Caco-2 (cell line): ENCODE measurements at regions of chr10 and their contacts with region 1.

Region 1: DNA sequence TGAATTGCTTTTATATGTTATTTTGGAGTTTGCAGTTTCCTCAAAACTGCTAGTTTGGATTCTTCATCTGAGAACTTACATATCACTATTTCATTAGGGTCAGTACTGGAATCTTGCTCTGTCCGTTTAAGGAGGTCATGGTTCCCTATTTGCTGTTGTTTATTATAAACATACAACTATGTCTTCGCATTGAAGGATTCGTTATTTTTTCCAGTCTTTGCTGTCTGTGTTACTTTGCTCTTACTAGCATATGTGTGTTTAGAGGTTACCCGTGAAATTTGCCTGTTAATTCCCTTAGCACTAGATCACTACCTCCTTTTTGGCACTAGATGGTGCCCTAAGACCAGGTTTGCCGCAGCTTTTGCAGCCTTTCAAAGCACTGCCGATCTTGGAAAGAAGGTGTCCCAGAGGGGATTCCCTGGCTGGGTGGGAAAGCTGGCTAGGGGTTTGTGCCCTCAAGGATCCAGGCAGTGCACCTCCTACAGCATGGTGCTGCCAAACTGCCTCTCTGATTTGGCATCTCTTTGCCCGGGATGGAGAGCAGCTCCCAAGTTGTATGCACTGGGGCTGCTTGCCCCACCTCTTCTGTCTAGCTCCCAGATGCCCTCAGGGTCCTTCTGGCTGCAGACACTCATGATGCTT is 103.1 kb upstream of the APBB1IP start:
- DNase-seq: peak; percentile 78 to 81
- H3K4me3 ChIP-seq: no peak overlapping the region
- H3K4me3 Mint-ChIP-seq: peak overlapping the region; percentile 43
- H3K27ac Mint-ChIP-seq: peak overlapping the region; percentile 53
- H3K4me1 ChIP-seq: peaks cover 6% of the 10 kb centered on the region
- H3K4me1 Mint-ChIP-seq: peaks cover 23% of the 10 kb centered on the region
- H3K27me3 ChIP-seq: no peaks in the 10 kb centered on the region
- H3K27me3 Mint-ChIP-seq: no peaks in the 10 kb centered on the region
- CTCF ChIP-seq: peak; percentile 86 to 98

Region 2: DNA sequence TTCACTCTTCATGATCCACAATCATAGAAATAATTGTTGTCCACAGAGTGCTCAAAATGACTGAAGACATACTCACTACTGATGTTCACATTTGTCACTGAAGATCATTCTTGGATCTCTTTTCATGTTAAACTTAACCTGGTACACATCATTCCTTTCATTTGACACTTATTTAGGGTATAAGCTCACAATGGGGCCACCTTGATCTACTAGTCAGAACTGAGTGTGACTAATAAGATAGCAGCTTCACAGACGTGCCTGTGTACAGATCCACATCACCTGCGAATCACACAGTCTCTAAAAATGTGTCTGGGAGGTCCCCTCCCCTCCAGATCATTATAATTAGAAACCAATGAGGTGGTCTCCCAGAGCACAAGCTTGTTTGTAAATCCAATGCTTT is 96.7 kb before region 1 on chr10:
- CTCF ChIA-PET with region 1: no interaction called
- POLR2A ChIA-PET with region 1: no interaction called
- intact Hi-C with region 1: no loop called
- DNase-seq: no peak
- H3K4me3 ChIP-seq: no peak overlapping the region
- H3K4me3 Mint-ChIP-seq: no peak overlapping the region
- H3K27ac Mint-ChIP-seq: no peak overlapping the region
- H3K4me1 ChIP-seq: no peaks in the 10 kb centered on the region
- H3K4me1 Mint-ChIP-seq: no peaks in the 10 kb centered on the region
- H3K27me3 ChIP-seq: no peaks in the 10 kb centered on the region; the same call in 1 of the 2 replicates
- H3K27me3 Mint-ChIP-seq: peaks cover 36% of the 10 kb centered on the region
- CTCF ChIP-seq: no peak

Region 3: GRCh38 chr10:26318672-26319071 is 16.4 kb before region 1 on chr10:
- CTCF ChIA-PET with region 1: no interaction called
- POLR2A ChIA-PET with region 1: no interaction called
- intact Hi-C with region 1: loop called (anchors 1 kb)
- DNase-seq: peak; percentile 56 to 81
- H3K4me3 ChIP-seq: no peak overlapping the region
- H3K4me3 Mint-ChIP-seq: peak overlapping the region; percentile 7
- H3K27ac Mint-ChIP-seq: peak overlapping the region; percentile 3
- H3K4me1 ChIP-seq: peaks cover 9% of the 10 kb centered on the region
- H3K4me1 Mint-ChIP-seq: peaks cover 13% of the 10 kb centered on the region
- H3K27me3 ChIP-seq: no peaks in the 10 kb centered on the region
- H3K27me3 Mint-ChIP-seq: no peaks in the 10 kb centered on the region
- CTCF ChIP-seq: no peak

Region 4: DNA sequence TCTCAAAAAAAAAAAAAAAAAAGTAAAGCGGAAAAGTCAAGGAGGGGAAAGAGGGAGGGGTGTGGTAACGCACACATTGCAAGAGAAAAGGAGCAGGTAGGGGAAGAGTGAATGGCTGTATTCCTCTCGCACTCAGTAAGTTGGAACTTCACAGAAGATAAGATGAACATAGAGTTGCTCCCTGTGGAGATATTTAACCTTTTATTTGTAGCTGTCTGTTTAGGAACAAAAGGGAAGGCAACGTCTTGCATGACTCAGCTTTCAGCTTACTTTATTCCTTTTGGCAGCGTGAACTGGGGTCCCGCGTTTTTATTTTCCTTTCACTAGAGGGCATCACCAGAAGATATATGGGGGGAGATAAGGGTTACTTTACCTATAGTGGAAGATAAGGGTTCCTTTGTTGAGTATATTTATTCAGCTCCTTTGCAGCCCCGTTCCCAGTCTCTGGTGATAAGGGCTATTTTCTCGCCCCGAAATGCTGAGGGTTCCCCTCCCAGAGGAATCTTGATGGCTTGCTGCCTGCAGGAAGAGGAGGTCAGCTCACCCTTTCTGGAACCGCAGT is 181.6 kb after region 1 on chr10:
- CTCF ChIA-PET with region 1: interaction called, 3 read pairs
- POLR2A ChIA-PET with region 1: no interaction called
- intact Hi-C with region 1: loop called (anchors 1 kb)
- DNase-seq: peak; percentile 87 to 92
- H3K4me3 ChIP-seq: peak overlapping the region; percentile 16
- H3K4me3 Mint-ChIP-seq: peak overlapping the region; percentile 69
- H3K27ac Mint-ChIP-seq: peak overlapping the region; percentile 95
- H3K4me1 ChIP-seq: peaks cover 32% of the 10 kb centered on the region
- H3K4me1 Mint-ChIP-seq: peaks cover 33% of the 10 kb centered on the region
- H3K27me3 ChIP-seq: no peaks in the 10 kb centered on the region
- H3K27me3 Mint-ChIP-seq: no peaks in the 10 kb centered on the region
- CTCF ChIP-seq: peak in 1 of 2 experiments; percentile 47

Region 5: GRCh38 chr10:26697163-26697921 is 362.3 kb after region 1 on chr10 and contains the start of gene PDSS1:
- CTCF ChIA-PET with region 1: no interaction called
- POLR2A ChIA-PET with region 1: no interaction called
- intact Hi-C with region 1: loop called (anchors 10 kb)
- DNase-seq: peak; percentile 79 to 84
- H3K4me3 ChIP-seq: peak within 1 kb of the TSS; percentile 94
- H3K4me3 Mint-ChIP-seq: peak within 1 kb of the TSS; percentile 99
- H3K27ac Mint-ChIP-seq: peak within 1 kb of the TSS; percentile 94
- H3K4me1 ChIP-seq: peaks cover 17% of the 10 kb centered on the region
- H3K4me1 Mint-ChIP-seq: peaks cover 18% of the 10 kb centered on the region
- H3K27me3 ChIP-seq: no peaks in the 10 kb centered on the region
- H3K27me3 Mint-ChIP-seq: no peaks in the 10 kb centered on the region
- CTCF ChIP-seq: no peak
- total RNA-seq, gene PDSS1: 22.4 and 24.9 TPM in 2 replicates

Region 6: GRCh38 chr10:26881600-26882331 is 546.7 kb after region 1 on chr10:
- CTCF ChIA-PET with region 1: no interaction called
- POLR2A ChIA-PET with region 1: no interaction called
- intact Hi-C with region 1: loop called (anchors 1 kb)
- DNase-seq: peak in 1 of 2 experiments; percentile 59
- H3K4me3 ChIP-seq: no peak overlapping the region
- H3K4me3 Mint-ChIP-seq: no peak overlapping the region
- H3K27ac Mint-ChIP-seq: no peak overlapping the region
- H3K4me1 ChIP-seq: no peaks in the 10 kb centered on the region
- H3K4me1 Mint-ChIP-seq: peaks cover 11% of the 10 kb centered on the region
- H3K27me3 ChIP-seq: no peaks in the 10 kb centered on the region; the same call in 1 of the 2 replicates
- H3K27me3 Mint-ChIP-seq: peaks cover 7% of the 10 kb centered on the region
- CTCF ChIP-seq: peak; percentile 82 to 90